Activated CD4-positive, alpha-beta memory T cell treated with anti-CD3 and anti-CD28 coated beads, Interleukin-2, amount 10 ng/mL, durations not matched to agents 7 days and 5 days (primary cell): ENCODE measurements at regions of chr1 and their contacts with region 1.

Region 1: DNA sequence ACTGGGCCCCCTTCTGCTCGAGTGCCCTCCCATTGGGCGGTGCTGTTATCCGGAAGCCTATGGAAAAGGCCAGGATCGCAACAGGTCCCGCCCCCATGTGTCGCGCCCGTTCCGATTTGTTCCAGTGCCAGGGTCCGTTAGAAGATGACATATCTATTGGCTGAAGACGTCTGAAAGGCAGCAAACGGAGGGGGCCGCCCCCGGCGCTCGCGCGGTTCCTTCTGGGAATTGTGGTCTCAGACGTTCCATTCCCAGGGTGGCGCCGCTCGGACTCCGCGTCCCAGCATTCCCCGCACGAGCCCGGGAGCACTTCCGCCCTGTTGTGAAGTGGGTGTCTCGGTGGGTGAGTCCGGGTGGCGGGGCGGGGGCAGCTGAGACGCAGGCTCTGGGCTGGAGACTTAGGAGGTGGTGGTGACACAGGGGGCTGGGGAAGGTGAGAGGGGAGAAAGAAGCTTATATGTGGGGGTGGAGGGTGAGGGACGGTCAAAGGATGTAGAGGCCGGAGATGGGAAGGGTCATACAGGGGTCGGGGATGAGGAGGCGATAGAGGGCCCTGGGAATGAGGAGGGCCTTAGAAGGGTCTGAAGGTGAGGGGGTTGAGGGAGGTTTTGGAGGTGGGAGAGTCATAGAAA is at the start of gene ZSCAN20:
- DNase-seq: peak; percentile 88
- H3K4me3 Mint-ChIP-seq: peak within 1 kb of the TSS; percentile 85
- H3K27ac Mint-ChIP-seq: peak within 1 kb of the TSS; percentile 69
- H3K4me1 Mint-ChIP-seq: peaks cover 30% of the 10 kb centered on the region
- H3K27me3 Mint-ChIP-seq: no peaks in the 10 kb centered on the region
- total RNA-seq, gene ZSCAN20: 2.1 to 2.3 TPM

Region 2: DNA sequence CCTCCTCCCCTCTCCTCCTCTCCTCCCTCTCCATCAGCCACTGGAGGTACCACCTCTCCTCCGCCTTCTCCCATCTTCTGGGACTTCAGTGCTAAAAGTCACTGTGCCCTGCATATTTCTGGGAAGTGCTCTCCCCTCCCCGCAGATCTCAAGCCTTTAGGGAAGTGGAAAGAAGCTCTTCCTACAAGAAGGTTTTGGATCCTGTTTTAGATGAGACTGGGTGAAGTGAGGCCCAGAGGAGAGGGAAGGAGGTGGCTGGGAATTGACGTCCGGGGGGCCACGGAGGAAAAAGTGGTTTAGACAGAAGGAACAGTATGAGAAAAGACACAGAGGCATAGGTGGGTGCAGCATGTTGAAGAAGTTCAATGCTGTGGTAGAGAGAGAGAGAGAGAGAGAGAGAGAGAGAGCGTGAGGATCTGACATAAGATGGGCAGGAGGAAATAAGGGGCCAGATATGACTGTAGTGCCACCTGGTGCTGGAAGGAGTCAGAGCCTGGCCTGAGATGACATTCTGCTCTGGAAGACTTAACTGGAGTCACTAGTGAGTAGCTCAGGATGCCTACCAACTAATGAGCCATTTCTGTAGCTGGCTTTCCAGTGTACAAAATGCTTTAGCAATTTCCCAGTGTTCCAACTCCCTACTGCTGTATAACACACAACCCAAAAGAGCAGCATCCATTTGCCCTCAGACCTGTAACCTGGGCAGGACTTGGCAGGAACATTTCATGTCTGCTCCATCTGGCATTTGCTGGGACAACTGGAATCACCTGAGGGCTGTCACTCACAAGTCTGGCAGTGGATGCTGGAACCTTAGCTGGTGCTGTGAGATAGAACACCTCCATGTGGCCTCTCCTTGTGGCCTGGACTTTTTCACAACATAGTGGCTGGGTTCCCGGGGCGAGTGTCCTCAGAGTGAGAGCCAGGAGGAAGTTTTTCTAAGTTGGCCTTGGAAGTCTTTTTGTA is 16.6 kb before region 1 on chr1:
- CTCF ChIA-PET with region 1: interaction called, 22 read pairs
- POLR2A ChIA-PET with region 1: no interaction called
- DNase-seq: peak; percentile 58
- H3K4me3 Mint-ChIP-seq: no peak overlapping the region
- H3K27ac Mint-ChIP-seq: no peak overlapping the region
- H3K4me1 Mint-ChIP-seq: peaks cover 4% of the 10 kb centered on the region
- H3K27me3 Mint-ChIP-seq: peaks cover 34% of the 10 kb centered on the region